PC-9 (cell line): ENCODE measurements at regions of chr6 and their contacts with region 1.

Region 1: GRCh38 chr6:89371849-89372505 is 19.5 kb upstream of the UBE2J1 start:
- DNase-seq: peak in 1 of 2 experiments; percentile 64
- H3K4me3 ChIP-seq: no peak overlapping the region
- H3K27ac ChIP-seq: no peak overlapping the region
- H3K4me1 ChIP-seq: peaks cover 15% of the 10 kb centered on the region
- H3K27me3 ChIP-seq: no peaks in the 10 kb centered on the region
- CTCF ChIP-seq: peak; percentile 82

Region 2: GRCh38 chr6:89080542-89081422 is 291.2 kb before region 1 on chr6 and contains the start of gene PNRC1:
- CTCF ChIA-PET with region 1: no interaction called
- POLR2A ChIA-PET with region 1: no interaction called
- intact Hi-C with region 1: loop called (anchors 1 kb)
- DNase-seq: peak; percentile 91 to 98
- H3K4me3 ChIP-seq: peak within 1 kb of the TSS; percentile 98
- H3K27ac ChIP-seq: peak within 1 kb of the TSS; percentile 63
- H3K4me1 ChIP-seq: no peaks in the 10 kb centered on the region; the same call in 1 of the 2 replicates
- H3K27me3 ChIP-seq: no peaks in the 10 kb centered on the region
- CTCF ChIP-seq: no peak
- total RNA-seq, gene PNRC1: 58.3 and 66.9 TPM in 2 replicates

Region 3: DNA sequence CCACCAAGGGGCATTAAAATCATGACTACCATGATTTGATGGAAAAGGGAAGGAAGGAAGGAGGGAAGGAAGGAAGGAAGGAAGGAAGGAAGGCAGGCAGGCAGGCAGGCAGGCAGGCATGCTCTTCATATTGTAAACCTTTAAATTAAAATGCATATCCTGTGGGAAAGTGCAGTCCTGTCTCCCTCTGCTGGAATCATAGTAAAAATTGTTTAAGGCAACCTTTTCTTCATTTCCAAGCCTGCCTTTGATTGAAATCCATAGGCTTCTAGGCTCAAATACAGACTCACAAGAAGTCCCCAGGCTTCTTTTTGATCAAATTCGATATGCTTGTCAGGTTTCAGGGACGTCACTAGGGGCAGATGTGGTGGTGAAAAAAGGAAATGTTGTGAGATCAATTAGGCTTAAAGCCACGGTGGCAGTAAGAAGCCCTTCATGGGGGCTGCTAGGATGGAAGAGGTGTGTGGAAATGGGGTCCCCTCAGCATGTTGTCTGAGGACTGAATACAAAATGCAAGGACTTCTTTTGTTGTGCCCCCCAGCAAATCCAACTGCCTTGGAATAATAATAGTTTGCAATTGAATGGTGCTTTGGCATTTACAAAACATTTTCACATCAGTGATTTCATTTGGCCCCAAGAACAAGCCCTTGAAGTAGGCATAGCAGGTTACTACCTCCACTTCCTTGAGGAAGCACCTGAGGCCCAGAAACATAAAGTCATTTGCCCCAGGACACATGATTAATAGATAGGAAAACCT is 129.2 kb before region 1 on chr6:
- CTCF ChIA-PET with region 1: no interaction called
- POLR2A ChIA-PET with region 1: no interaction called
- intact Hi-C with region 1: loop called (anchors 5 kb)
- DNase-seq: peak in 1 of 2 experiments; percentile 43
- H3K4me3 ChIP-seq: no peak overlapping the region
- H3K27ac ChIP-seq: peak overlapping the region; percentile 33
- H3K4me1 ChIP-seq: peaks cover 12% of the 10 kb centered on the region; the same call in 1 of the 2 replicates
- H3K27me3 ChIP-seq: no peaks in the 10 kb centered on the region
- CTCF ChIP-seq: peak; percentile 58

Region 4: GRCh38 chr6:89297695-89298351 is 74.2 kb before region 1 on chr6:
- CTCF ChIA-PET with region 1: interaction called, 3 read pairs
- POLR2A ChIA-PET with region 1: no interaction called
- intact Hi-C with region 1: loop called (anchors 5 kb)
- DNase-seq: peak; percentile 87 to 96
- H3K4me3 ChIP-seq: peak overlapping the region; percentile 37; the same call in 1 of the 2 replicates
- H3K27ac ChIP-seq: peak overlapping the region; percentile 100
- H3K4me1 ChIP-seq: peaks cover 36% of the 10 kb centered on the region
- H3K27me3 ChIP-seq: no peaks in the 10 kb centered on the region
- CTCF ChIP-seq: no peak

Region 5: GRCh38 chr6:89667872-89668556 is 296.0 kb after region 1 on chr6:
- CTCF ChIA-PET with region 1: no interaction called
- POLR2A ChIA-PET with region 1: no interaction called
- intact Hi-C with region 1: no loop called
- DNase-seq: no peak
- H3K4me3 ChIP-seq: no peak overlapping the region
- H3K27ac ChIP-seq: no peak overlapping the region
- H3K4me1 ChIP-seq: no peaks in the 10 kb centered on the region
- H3K27me3 ChIP-seq: no peaks in the 10 kb centered on the region
- CTCF ChIP-seq: no peak